Colonic mucosa (tissue), 4 donors: ENCODE measurements at regions of chr16 and their contacts with region 1.

Region 1: GRCh38 chr16:11851294-11852091 is at the start of gene RSL1D1:
- DNase-seq: peak; percentile 92
- H3K4me3 ChIP-seq: peak within 1 kb of the TSS; percentile 89
- H3K27ac ChIP-seq: peak within 1 kb of the TSS; percentile 71
- H3K4me1 ChIP-seq: peaks cover 9% of the 10 kb centered on the region
- H3K27me3 ChIP-seq: no peaks in the 10 kb centered on the region
- CTCF ChIP-seq: no peak
- total RNA-seq, gene RSL1D1: 89.5 to 99.3 TPM

Region 2: GRCh38 chr16:11914210-11915113 is 63.0 kb after region 1 on chr16:
- intact Hi-C with region 1: loop called (anchors 5 kb)
- DNase-seq: peak; percentile 62
- H3K4me3 ChIP-seq: peak overlapping the region; percentile 82
- H3K27ac ChIP-seq: peak overlapping the region; percentile 95
- H3K4me1 ChIP-seq: peaks cover 8% of the 10 kb centered on the region
- H3K27me3 ChIP-seq: no peaks in the 10 kb centered on the region
- CTCF ChIP-seq: no peak

Region 3: GRCh38 chr16:12043953-12044352 is 192.5 kb after region 1 on chr16:
- intact Hi-C with region 1: no loop called
- DNase-seq: no peak
- H3K4me3 ChIP-seq: no peak overlapping the region
- H3K27ac ChIP-seq: no peak overlapping the region
- H3K4me1 ChIP-seq: no peaks in the 10 kb centered on the region
- H3K27me3 ChIP-seq: no peaks in the 10 kb centered on the region
- CTCF ChIP-seq: no peak